Psoas muscle (tissue), 8 donors: ENCODE measurements at regions of chr5 and their contacts with region 1.

Region 1: GRCh38 chr5:15995341-15996052 is 184.1 kb downstream of the MARCHF11 start:
- DNase-seq: no peak
- ATAC-seq: no peak
- H3K4me3 ChIP-seq: no peak overlapping the region
- H3K27ac ChIP-seq: no peak overlapping the region
- H3K4me1 ChIP-seq: no peaks in the 10 kb centered on the region
- H3K27me3 ChIP-seq: no peaks in the 10 kb centered on the region
- CTCF ChIP-seq: peak; percentile 30

Region 2: GRCh38 chr5:15105796-15106393 is 889.6 kb before region 1 on chr5:
- intact Hi-C with region 1: loop called in 1 of 2 experiments (anchors 10 kb)
- DNase-seq: no peak
- ATAC-seq: peak in 1 of 4 donors; percentile 27
- H3K4me3 ChIP-seq: no peak overlapping the region
- H3K27ac ChIP-seq: no peak overlapping the region
- H3K4me1 ChIP-seq: no peaks in the 10 kb centered on the region
- H3K27me3 ChIP-seq: peaks cover 0 to 1% (median 0%) of the 10 kb centered on the region in 3 donors
- CTCF ChIP-seq: peak; percentile 59

Region 3: GRCh38 chr5:15821506-15821905 is 174.0 kb before region 1 on chr5:
- intact Hi-C with region 1: loop called in 1 of 2 experiments (anchors 10 kb)
- DNase-seq: no peak
- ATAC-seq: no peak
- H3K4me3 ChIP-seq: no peak overlapping the region
- H3K27ac ChIP-seq: no peak overlapping the region
- H3K4me1 ChIP-seq: no peaks in the 10 kb centered on the region
- H3K27me3 ChIP-seq: no peaks in the 10 kb centered on the region
- CTCF ChIP-seq: no peak